CD14-positive monocyte (primary cell): ENCODE measurements at regions of chr2 and their contacts with region 1.

Region 1: DNA sequence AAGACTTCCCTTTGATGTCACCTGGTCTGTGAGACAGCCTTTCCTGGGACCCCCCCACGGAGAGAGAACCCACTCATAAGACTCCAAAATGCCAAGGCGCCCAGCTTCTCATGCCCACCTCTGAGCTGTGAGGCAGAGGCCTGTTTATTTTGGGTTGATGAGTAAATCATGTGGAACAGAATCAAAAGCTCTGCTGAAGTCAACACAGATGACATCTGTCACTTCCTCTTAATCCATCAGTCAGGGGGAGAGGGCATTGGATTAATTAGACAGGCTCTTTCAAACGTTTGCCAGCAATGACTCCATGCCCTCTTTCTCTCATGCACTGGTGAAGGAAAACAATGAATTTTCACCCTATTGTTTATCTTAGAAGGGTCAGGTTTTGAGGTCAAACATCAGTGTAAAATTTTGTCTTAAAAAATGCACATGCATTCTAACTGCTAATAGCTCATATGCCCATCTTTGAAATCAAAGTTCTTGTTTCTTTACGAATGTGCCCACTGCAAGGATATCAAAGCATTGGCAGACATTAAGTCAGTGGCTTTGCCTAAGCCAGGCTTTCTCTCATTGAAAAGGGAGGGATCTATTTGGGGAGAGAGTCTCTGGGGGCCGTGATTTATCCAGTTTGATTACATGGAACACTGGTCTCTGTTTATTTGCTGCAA is 184.1 kb downstream of the ACKR3 start:
- DNase-seq: peak; percentile 23 to 41 (median 36)
- H3K4me3 ChIP-seq: no peak overlapping the region
- H3K4me3 Mint-ChIP-seq: no peak overlapping the region
- H3K27ac ChIP-seq: no peak overlapping the region
- H3K27ac Mint-ChIP-seq: peak overlapping the region in 6 of 7 donors; percentile 14 to 84 (median 50)
- H3K4me1 ChIP-seq: peaks cover 33 to 37% of the 10 kb centered on the region in 2 donors
- H3K4me1 Mint-ChIP-seq: peaks cover 49% of the 10 kb centered on the region
- H3K27me3 ChIP-seq: no peaks in the 10 kb centered on the region
- H3K27me3 Mint-ChIP-seq: peaks cover 2 to 10% (median 3%) of the 10 kb centered on the region in 3 donors
- CTCF ChIP-seq: no peak

Region 2: GRCh38 chr2:236705295-236706114 is 48.2 kb before region 1 on chr2:
- intact Hi-C with region 1: loop called (anchors 5 kb)
- DNase-seq: peak; percentile 41 to 69 (median 48)
- H3K4me3 ChIP-seq: peak overlapping the region in 1 of 3 experiments; percentile 16
- H3K4me3 Mint-ChIP-seq: peak overlapping the region in 1 of 2 donors; percentile 59
- H3K27ac ChIP-seq: peak overlapping the region in 1 of 2 donors; percentile 50
- H3K27ac Mint-ChIP-seq: peak overlapping the region in 6 of 7 donors; percentile 35 to 82 (median 54)
- H3K4me1 ChIP-seq: peaks cover 24 to 31% of the 10 kb centered on the region in 2 donors
- H3K4me1 Mint-ChIP-seq: peaks cover 37% of the 10 kb centered on the region
- H3K27me3 ChIP-seq: no peaks in the 10 kb centered on the region
- H3K27me3 Mint-ChIP-seq: peaks cover 3 to 15% (median 3%) of the 10 kb centered on the region in 3 donors
- CTCF ChIP-seq: no peak